ENCODE measurements at regions of chr6 and their contacts with region 1.

Region 1: GRCh38 chr6:41470331-41471063 is 75.7 kb upstream of the FOXP4 start:
- DNase-seq: peak in 1 of 2 experiments; percentile 79
- H3K4me3 ChIP-seq: peak overlapping the region; percentile 31 to 64 (median 43)
- H3K27ac ChIP-seq: no peak overlapping the region
- H3K4me1 ChIP-seq: peaks cover 21 to 29% (median 23%) of the 10 kb centered on the region in 4 experiments
- H3K27me3 ChIP-seq: peaks cover 15 to 63% (median 56%) of the 10 kb centered on the region in 4 experiments
- CTCF ChIP-seq: no peak
- EP300 ChIP-seq: no peak
- POLR2A ChIP-seq: no peak
- RAD21 ChIP-seq: no peak

Region 2: GRCh38 chr6:41286544-41287346 is 183.8 kb before region 1 on chr6 and contains the start of gene TREM1:
- CTCF ChIA-PET with region 1: no interaction called
- POLR2A ChIA-PET with region 1: no interaction called
- DNase-seq: peak in 1 of 2 experiments; percentile 39
- H3K4me3 ChIP-seq: no peak within 1 kb of the TSS
- H3K27ac ChIP-seq: no peak within 1 kb of the TSS
- H3K4me1 ChIP-seq: peaks cover 0 to 5% (median 0%) of the 10 kb centered on the region in 4 experiments; a peak in 2 of 7 replicates
- H3K27me3 ChIP-seq: peaks cover 0 to 12% (median 4%) of the 10 kb centered on the region in 4 experiments; a peak in 4 of 7 replicates
- CTCF ChIP-seq: no peak
- EP300 ChIP-seq: no peak
- POLR2A ChIP-seq: no peak
- RAD21 ChIP-seq: no peak
- total RNA-seq, gene TREM1: not detected in 2 replicates

Region 3: DNA sequence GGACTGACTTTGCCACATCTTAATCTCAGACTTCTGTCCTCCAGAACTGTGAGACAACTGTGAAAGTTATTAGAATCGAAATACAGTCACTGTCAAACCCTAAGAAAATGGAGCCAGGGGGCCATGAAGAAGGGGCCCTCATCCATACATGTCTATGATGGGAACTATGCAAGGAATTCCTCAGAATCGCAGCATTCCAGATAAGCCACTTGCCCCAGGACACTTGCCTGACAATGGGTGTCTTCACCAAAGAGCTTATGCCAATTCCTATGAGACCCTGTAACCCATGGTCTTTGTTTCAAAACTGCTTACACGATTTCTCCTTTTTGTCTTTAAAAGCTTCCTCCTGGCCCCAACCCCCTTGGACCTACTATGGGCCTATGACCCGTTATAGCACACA is 14.7 kb before region 1 on chr6:
- CTCF ChIA-PET with region 1: interaction called, 66 read pairs
- POLR2A ChIA-PET with region 1: interaction called, 4 read pairs
- DNase-seq: no peak
- H3K4me3 ChIP-seq: no peak overlapping the region
- H3K27ac ChIP-seq: no peak overlapping the region
- H3K4me1 ChIP-seq: peaks cover 5 to 15% (median 8%) of the 10 kb centered on the region in 4 experiments
- H3K27me3 ChIP-seq: peaks cover 0 to 8% (median 0%) of the 10 kb centered on the region in 4 experiments; a peak in 4 of 7 replicates
- CTCF ChIP-seq: no peak
- EP300 ChIP-seq: no peak
- POLR2A ChIP-seq: no peak
- RAD21 ChIP-seq: no peak